ENCODE measurements at regions of chr4 and their contacts with region 1.

Region 1: DNA sequence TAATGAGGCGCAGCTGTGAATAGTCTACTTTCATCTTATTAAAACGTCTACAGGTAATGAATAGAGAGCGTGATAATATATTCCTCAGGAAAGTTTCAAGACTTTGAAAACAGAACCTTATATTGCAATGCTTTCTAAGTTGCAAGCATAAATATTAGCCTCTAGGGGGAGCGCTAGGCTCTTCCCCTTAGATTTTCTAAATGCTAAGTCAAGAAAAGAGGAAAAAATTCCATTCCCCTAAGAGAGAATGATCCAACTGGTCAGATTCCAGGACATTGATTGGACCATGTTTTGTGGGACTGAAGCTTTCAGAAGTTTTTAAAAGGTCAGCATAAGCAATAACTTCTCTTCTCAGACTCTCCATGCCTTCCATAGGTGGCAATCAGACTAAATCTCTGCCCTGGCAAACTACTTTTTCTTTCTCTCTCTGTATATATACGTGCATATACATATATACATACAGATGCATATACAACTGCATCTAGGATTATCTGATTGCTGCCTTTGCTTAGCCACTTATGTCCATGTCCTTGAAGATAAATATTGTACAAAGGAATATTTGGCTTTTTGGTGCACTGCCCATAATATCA is 492.9 kb downstream of the INPP4B start:
- DNase-seq: peak; percentile 88
- ATAC-seq: peak; percentile 55
- H3K4me3 ChIP-seq: no peak overlapping the region; the same call in 1 of the 2 replicates
- H3K27ac ChIP-seq: peak overlapping the region; percentile 31
- H3K4me1 ChIP-seq: peaks cover 46% of the 10 kb centered on the region
- H3K27me3 ChIP-seq: no peaks in the 10 kb centered on the region
- CTCF ChIP-seq: peak; percentile 96

Region 2: DNA sequence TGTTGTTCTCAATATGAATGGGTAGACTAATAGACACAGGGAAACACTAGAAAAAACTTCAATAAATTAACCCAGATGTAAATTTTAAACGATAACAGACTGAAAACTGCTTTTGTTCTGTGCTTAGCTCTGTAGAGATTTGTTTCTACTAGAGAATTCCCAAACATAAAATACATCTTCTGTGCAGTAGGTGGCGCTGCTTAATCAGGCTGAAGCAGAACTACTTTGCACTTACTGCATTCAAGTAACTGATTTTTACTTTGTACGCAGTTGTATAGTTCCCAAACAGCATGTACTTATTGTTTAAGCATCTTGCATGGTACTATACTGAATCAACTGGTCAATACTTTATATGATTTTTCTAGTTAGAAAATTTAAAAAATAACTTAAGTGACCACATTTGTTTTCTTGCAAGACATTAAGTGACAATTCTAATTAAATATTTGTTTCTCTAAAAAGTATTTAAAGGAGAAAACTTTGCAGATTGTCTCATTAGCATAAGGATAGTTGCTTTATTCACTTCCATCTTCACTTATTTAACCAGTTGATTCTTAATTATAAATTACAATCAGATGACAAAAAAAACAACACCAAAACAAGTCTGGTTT is 226.2 kb before region 1 on chr4:
- CTCF ChIA-PET with region 1: interaction called, 3 read pairs
- POLR2A ChIA-PET with region 1: no interaction called
- intact Hi-C with region 1: loop called (anchors 2 kb)
- DNase-seq: peak; percentile 87
- ATAC-seq: peak; percentile 68
- H3K4me3 ChIP-seq: no peak overlapping the region
- H3K27ac ChIP-seq: no peak overlapping the region
- H3K4me1 ChIP-seq: peaks cover 17% of the 10 kb centered on the region
- H3K27me3 ChIP-seq: no peaks in the 10 kb centered on the region
- CTCF ChIP-seq: peak; percentile 96

Region 3: DNA sequence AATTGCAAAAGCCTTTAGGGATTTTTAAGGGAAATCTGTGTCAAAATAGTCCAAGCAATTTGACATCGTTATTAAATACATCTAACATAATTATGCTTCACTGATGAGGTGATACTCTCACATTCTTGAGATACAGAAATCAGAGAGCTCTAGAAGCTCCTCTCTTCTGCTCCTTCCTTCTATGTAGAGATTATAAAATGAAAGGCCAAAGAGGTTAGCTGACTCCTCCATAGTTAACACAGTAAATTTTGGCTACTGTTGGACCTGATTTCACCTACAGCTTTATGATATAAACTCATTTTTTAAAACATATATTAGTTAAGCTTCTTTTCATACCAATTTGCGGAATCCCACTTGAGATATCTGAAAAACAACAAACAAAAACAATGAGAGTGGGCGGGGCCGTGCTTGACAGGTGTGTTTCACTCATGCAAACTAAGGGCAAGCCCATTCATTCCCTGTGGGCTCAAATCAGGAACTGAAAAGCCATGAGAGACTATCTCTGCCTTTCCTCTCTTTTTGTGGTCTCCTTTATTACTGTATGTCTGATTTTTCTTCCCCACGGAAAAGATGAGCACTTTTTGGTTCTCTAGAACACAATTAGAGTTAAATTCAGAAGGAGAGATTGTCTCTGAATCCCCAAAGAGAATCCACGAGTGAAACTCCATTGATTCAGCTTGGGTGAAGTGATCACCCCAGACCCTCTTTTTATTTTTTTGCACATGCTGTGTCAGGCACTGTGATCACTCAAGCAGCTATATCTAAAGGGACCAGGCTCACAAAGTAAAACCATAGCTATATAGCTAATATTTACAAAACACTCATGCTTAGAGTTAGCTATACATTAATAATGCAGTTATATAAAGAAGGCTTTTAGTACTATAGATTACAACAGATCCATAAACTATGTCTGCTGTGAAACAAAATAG is 150.6 kb before region 1 on chr4:
- CTCF ChIA-PET with region 1: no interaction called
- POLR2A ChIA-PET with region 1: interaction called, 4 read pairs
- intact Hi-C with region 1: loop called (anchors 5 kb)
- DNase-seq: no peak
- ATAC-seq: no peak
- H3K4me3 ChIP-seq: no peak overlapping the region
- H3K27ac ChIP-seq: no peak overlapping the region
- H3K4me1 ChIP-seq: no peaks in the 10 kb centered on the region
- H3K27me3 ChIP-seq: no peaks in the 10 kb centered on the region
- CTCF ChIP-seq: no peak

Region 4: GRCh38 chr4:142474335-142475087 is 121.3 kb after region 1 on chr4:
- CTCF ChIA-PET with region 1: no interaction called
- POLR2A ChIA-PET with region 1: interaction called, 3 read pairs
- intact Hi-C with region 1: loop called (anchors 5 kb)
- DNase-seq: peak; percentile 98
- ATAC-seq: peak; percentile 86
- H3K4me3 ChIP-seq: peak overlapping the region; percentile 63
- H3K27ac ChIP-seq: peak overlapping the region; percentile 99
- H3K4me1 ChIP-seq: peaks cover 50% of the 10 kb centered on the region
- H3K27me3 ChIP-seq: no peaks in the 10 kb centered on the region
- CTCF ChIP-seq: no peak

Region 5: DNA sequence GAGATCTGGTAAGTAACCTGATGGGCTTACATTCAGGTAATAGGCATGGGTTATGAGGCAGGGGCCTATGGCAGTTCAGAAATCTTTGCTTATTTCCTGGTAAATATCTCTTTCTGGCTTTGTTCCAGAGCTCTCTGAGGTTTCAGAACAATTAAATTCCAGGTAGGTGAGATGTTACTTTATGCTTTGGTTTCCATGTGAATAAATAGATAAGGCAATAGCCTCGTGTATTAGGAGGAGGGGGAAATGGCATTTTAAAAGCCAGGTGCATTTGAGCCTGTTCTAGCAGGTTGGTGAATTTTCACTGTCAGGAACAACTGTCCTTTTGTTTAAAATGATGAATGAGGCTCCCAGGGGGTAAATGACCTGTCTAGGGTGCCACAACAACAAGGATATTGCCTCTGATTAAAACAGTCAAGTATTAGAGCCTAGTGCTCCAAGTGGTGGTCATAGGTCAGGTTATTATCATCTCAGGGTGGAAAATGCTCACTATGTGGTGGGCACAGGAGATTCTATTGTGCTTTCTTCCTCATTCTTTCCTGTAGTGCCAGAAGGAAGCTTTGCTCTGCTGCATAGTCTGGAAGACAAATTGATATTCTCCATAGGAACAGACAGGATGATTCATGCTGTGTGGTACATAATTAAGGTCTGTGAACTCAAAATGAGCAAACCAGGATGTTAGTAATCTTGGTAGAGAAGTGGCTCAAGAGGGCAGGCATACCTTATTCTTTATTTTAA is 196.7 kb after region 1 on chr4:
- CTCF ChIA-PET with region 1: no interaction called
- POLR2A ChIA-PET with region 1: no interaction called
- intact Hi-C with region 1: loop called (anchors 2 kb)
- DNase-seq: peak; percentile 96
- ATAC-seq: peak; percentile 92
- H3K4me3 ChIP-seq: peak overlapping the region; percentile 1; the same call in 1 of the 2 replicates
- H3K27ac ChIP-seq: peak overlapping the region; percentile 93
- H3K4me1 ChIP-seq: peaks cover 36% of the 10 kb centered on the region
- H3K27me3 ChIP-seq: no peaks in the 10 kb centered on the region
- CTCF ChIP-seq: peak; percentile 20; the same call in 1 of the 2 replicates

Region 6: DNA sequence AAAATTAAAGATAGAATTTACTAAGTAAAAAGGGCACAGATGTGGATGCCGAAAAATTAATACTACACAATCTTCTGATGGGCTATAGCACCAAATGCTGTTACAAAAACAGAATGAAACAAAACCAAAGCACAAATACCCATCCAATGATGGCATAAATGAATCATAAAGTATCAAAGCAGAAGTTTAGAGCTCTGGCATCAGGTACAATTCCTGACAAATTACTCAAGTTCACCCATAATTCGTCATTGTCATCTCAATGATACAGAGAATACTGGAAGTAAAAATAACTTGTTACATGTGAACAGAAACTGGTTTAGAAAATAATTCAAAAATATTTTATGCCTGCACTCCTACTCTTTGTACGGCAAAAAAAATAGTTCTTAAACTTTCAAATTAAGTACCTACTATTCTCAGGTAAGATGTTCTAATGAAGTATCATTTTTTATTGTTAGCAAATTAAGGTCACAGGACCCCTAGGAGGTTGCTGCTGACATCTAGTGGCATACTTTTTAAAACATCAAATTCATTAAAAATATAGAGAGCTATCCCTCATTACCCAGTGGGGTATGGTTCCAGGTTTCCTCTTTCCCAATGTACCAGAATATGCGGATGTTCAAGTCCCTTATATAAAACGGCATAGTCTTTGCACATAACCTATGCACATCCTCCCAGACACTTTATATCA is 366.8 kb after region 1 on chr4:
- CTCF ChIA-PET with region 1: no interaction called
- POLR2A ChIA-PET with region 1: no interaction called
- intact Hi-C with region 1: loop called (anchors 1 kb)
- DNase-seq: peak; percentile 93
- ATAC-seq: peak; percentile 67
- H3K4me3 ChIP-seq: no peak overlapping the region
- H3K27ac ChIP-seq: peak overlapping the region; percentile 76
- H3K4me1 ChIP-seq: peaks cover 33% of the 10 kb centered on the region
- H3K27me3 ChIP-seq: no peaks in the 10 kb centered on the region
- CTCF ChIP-seq: peak; percentile 88